Right lobe of liver (tissue), 6 donors: ENCODE measurements at regions of chr15 and their contacts with region 1.

Region 1: DNA sequence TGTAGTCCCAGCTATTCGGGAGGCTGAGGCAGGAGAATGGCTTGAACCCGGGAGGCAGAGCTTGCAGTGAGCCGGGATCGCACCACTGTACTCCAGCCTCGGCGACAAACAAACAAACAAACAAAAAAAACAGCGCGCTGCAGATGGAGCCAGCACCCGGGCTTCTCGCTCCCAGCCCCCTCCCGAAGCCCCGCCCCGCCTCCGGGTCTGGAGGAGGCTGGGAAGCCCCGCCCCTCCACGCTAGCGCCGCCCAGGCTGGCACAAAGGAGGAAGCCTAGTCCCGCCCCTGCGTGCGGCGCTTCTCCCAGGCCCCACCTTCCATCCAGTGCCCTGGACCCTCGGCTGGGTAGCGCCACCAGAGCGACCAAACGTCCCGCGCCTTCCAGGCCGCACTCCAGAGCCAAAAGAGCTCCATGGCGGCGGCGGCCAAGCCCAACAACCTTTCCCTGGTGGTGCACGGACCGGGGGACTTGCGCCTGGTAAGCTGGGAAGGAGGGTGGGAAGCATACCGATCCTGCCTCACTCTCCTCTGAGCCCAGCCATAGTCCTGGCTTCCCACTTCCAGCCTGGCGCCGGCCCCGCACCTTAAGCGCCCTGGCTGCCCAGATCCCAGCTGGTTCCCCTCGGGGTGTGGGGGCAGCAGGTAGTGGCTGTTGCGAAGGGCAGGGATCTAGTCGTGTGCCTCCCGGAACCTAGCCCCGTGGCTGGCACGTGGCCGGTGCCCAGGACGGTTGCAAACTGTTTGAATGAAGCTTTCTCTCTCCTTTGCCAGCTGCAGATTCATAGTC is at the start of gene SORD:
- DNase-seq: peak; percentile 97 to 98 (median 98)
- ATAC-seq: peak; percentile 88 to 95 (median 90)
- H3K4me3 ChIP-seq: peak within 1 kb of the TSS; percentile 88 to 99 (median 92)
- H3K27ac ChIP-seq: peak within 1 kb of the TSS; percentile 85 to 98 (median 97)
- H3K4me1 ChIP-seq: peaks cover 0 to 40% (median 2%) of the 10 kb centered on the region in 4 donors
- H3K27me3 ChIP-seq: no peaks in the 10 kb centered on the region
- CTCF ChIP-seq: no peak
- POLR2A ChIP-seq: peak; percentile 86
- total RNA-seq, gene SORD: 87.1 to 380 (median 236) TPM

Region 2: DNA sequence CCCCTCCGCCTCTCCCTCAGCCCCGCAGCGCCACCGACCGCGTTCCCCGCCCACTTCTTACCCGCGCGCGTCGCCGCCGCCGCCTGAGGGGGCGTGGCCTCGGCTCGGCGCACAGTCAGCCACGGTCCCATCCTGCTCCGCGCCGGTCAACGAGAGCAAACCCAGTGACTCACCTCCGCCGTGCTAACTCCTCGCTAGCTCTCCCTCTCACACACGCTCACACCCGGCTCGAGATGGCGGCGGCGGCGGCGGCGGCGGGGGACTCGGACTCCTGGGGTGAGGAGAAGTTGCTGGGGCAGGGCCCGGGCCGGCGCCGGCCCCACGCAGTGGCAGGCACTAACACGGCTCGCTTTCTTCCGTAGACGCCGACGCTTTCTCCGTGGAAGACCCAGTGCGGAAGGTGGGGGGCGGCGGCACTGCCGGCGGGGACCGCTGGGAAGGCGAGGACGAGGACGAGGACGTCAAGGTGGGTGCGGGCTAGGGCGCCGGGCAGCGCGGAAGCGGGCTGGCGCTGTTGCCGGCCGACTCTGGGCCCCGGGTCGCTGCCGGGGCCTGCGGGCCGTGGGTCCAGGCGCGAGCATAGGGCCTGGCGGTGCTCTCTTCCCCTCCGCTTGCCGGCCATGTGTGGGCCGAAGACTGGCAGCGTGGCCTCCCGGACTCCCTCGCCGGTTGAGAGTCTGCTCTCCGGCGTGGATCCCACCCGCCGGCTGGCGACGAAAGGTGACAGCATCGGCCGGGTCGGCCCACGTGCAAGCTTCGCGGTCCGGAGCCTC is 485.9 kb before region 1 on chr15 and contains the start of gene EIF3J:
- intact Hi-C with region 1: no loop called
- DNase-seq: peak; percentile 96
- ATAC-seq: peak; percentile 84 to 95 (median 90)
- H3K4me3 ChIP-seq: peak within 1 kb of the TSS; percentile 69 to 97 (median 92)
- H3K27ac ChIP-seq: peak within 1 kb of the TSS; percentile 90 to 98 (median 93)
- H3K4me1 ChIP-seq: peaks cover 0 to 25% (median 6%) of the 10 kb centered on the region in 4 donors
- H3K27me3 ChIP-seq: no peaks in the 10 kb centered on the region
- CTCF ChIP-seq: no peak
- POLR2A ChIP-seq: peak; percentile 83
- total RNA-seq, gene EIF3J: 30.1 to 59.8 (median 45.9) TPM

Region 3: DNA sequence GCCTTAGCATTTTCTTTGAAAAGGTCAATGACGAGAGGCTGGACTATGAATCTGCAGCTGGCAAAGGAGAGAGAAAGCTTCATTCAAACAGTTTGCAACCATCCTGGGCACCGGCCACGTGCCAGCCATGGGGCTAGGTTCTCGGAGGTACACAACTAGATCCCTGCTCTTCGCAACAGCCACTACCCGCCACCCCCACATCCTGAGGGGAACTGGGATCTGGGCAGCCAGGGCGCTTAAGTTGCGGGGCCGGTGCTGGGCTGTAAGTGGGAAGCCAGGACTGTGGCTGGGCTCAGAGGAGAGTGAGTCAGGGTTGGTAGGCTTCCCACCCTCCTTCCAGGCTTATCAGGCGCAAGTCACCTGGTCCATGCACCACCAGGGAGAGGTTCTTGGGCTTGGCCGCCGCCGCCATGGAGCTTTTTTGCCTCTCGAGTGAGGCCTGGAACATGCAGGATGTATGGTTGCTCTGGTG is 161.6 kb before region 1 on chr15:
- intact Hi-C with region 1: loop called in 1 of 2 experiments (anchors 10 kb)
- DNase-seq: peak; percentile 43 to 89 (median 88)
- ATAC-seq: peak; percentile 45 to 73 (median 62)
- H3K4me3 ChIP-seq: no peak overlapping the region
- H3K27ac ChIP-seq: peak overlapping the region in 1 of 3 donors; percentile 67
- H3K4me1 ChIP-seq: peaks cover 0 to 42% (median 0%) of the 10 kb centered on the region in 4 donors
- H3K27me3 ChIP-seq: no peaks in the 10 kb centered on the region
- CTCF ChIP-seq: no peak
- POLR2A ChIP-seq: no peak